AG04449 (cell line): ENCODE measurements at regions of chr10 and their contacts with region 1.

Region 1: DNA sequence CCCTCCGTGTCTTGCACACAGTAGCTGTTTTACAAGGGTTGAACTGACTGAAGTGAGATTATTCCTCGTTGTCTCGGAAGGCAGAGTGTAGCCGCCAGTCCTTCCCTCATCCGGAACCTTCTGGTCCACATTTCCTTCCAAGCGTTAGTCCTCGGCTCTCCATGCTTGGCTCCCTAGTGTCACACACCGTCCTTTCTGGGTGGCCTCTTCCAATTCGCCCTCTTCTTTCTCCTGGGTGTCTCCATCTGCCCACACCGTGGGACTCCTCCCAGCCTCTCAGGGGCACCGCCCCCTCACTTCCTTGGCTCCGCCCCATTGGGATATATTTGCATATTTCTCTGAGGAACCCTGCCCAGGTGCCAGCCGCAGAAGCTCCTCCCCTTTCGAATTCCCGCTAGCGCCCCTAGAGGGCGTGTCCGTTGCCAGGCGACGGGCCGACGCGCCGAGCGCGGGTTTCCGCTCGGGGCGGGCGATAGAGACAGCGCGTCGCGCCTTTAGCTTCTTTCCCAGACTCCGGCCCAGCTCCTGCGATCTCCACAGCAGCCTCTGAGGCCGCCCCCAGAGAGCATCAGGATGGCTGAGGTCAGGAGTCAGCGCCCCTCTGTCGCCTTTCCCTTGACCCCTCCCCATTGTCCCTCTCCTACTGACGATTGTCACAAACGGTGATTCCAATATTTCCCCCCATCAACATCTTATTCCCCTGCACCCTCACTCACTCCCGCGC is at the start of gene CFAP58:
- DNase-seq: no peak
- H3K4me3 ChIP-seq: peak within 1 kb of the TSS; percentile 63
- CTCF ChIP-seq: peak; percentile 76

Region 2: DNA sequence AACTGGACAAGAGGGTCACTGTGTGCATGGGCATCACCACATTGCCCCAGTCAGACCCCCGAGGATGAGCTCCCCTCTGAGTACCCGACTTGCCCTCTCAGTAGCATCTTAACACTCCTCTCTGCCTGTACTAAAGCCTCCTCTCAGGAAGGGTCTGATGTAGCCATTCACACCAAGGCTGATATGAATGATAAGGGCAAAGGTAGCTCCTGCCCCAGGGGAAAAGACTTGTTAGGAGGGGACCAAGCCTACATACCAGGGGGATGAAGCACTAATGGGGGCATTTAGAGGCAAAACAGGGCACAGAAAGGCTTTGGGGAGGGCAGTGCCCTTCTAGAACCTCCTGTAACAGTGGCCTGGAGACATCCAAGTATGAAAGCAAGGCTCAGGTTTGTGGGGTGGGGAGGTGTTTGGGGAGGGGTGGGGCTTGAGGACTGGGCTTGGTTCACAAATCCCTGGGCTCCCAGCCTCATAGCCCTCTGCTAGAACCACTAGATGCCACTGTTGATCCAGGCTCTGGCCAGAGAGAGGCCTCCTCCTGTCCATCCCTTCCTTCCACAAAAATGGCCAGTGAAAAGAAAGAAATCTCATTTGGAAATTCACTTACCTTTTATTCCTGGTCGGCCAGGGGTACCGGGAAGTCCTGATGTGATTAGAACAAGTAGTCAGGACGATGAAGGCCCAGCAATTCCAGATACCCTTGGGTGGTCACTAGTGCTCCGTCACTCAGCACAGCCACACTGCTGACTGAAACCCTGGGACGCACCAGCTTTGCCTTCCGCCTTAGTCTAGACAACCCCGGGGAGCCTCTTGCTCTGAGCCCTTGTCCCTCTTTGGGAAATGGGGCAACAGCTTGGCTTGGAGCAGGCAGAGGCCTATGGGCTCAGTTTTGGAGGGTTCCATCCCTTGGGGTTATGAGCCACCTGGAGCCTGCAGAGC is 308.1 kb before region 1 on chr10:
- CTCF ChIA-PET with region 1: interaction called, 12 read pairs
- POLR2A ChIA-PET with region 1: no interaction called
- DNase-seq: no peak
- H3K4me3 ChIP-seq: no peak overlapping the region
- CTCF ChIP-seq: peak; percentile 79

Region 3: GRCh38 chr10:104268716-104269645 is 84.5 kb before region 1 on chr10 and contains the start of gene GSTO2:
- CTCF ChIA-PET with region 1: interaction called, 290 read pairs
- POLR2A ChIA-PET with region 1: interaction called, 7 read pairs
- DNase-seq: peak; percentile 88
- H3K4me3 ChIP-seq: peak within 1 kb of the TSS; percentile 83
- CTCF ChIP-seq: no peak

Region 4: GRCh38 chr10:104308439-104308903 is 45.0 kb before region 1 on chr10:
- CTCF ChIA-PET with region 1: interaction called, 127 read pairs
- POLR2A ChIA-PET with region 1: no interaction called
- DNase-seq: no peak
- H3K4me3 ChIP-seq: no peak overlapping the region
- CTCF ChIP-seq: no peak

Region 5: GRCh38 chr10:104337974-104338735 is 15.3 kb before region 1 on chr10 and contains the start of gene ITPRIP:
- CTCF ChIA-PET with region 1: interaction called, 62 read pairs
- POLR2A ChIA-PET with region 1: no interaction called
- DNase-seq: no peak
- H3K4me3 ChIP-seq: peak within 1 kb of the TSS; percentile 85
- CTCF ChIP-seq: peak; percentile 28

Region 6: DNA sequence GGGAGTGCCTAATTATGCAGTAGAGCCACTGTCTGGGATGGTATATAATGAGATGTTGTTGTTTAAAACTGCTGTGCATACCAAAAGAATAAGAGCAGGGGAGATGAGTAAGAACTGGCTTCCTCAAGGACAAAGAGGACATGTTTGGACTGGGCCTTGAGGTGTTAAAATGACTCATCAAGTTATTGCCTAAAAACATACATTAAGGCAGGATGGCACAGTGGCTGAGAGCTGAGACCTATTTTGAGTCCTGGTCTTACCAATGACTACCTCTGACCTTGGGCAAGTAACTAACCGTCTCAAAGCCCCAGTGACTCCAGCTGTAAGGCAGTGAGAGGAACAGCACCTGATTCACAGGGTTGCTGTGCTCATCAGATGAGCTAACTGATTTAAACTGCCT is 71.2 kb after region 1 on chr10:
- CTCF ChIA-PET with region 1: no interaction called
- POLR2A ChIA-PET with region 1: no interaction called
- DNase-seq: no peak
- H3K4me3 ChIP-seq: no peak overlapping the region
- CTCF ChIP-seq: no peak